ENCODE measurements at regions of chr1 and their contacts with region 1.

Region 1: GRCh38 chr1:66331657-66332547 is 202.1 kb upstream of the SGIP1 start:
- DNase-seq: peak; percentile 78

Region 2: DNA sequence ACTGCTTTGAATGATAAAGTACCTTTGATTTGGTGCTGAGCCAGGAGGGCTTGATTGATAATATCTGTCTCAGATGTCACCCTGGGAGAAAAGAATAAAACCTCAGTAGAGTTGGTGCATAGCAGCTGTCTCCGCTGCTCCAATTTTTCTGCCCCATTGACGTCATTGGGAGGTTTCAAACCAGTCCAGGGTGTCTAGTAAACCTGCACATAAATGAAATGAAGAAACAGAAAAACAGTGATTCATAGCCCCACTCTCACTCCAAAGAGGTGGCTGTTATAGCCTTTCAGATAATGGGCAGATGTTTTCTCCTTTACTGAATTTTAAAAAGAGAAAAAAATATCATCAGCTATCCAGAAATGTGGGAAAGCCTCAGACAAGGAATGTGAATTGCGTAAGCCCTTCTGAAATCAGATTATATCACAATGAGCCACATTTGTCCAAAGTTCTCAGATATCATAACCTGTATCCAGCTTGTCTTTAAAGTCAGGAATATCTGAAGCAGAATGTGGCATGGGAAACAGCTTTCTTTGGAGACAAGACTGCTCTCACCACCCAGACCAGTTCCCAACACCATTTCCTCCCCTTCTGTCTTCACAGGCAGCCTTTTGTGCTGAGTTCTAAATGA is 149.2 kb before region 1 on chr1:
- CTCF ChIA-PET with region 1: no interaction called
- POLR2A ChIA-PET with region 1: no interaction called
- DNase-seq: peak; percentile 41

Region 3: DNA sequence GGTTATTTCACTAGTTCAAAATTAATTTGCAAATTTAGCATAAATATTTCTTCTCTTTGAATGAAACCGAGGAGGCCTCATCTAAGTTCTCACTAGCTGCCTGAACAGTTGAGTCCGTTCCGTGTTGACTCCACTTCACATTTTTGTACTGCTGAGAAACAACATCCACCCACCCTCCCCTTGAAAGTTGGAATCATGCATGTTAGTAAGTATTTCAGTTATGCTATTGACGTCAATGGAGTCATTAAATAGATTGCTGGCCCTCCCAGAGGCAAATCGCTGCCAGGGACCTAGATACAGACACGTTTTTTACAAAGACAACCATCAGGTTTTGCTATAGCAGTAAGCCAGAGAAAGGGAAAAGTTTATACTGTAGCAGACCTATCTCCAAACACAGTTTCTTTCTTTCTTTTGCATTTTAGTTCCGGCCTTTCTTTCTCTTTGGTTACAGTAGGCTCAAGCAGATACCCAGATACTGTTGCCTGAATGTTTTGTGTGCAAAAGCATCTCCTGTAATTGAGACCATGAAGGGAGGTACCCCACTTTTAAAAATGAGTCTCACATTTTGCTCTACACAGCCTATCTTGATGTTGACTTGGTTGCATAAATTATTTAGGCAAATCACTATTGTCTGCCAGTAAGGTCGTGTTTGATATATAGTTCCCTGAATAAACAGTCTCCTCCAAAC is 60.5 kb before region 1 on chr1:
- CTCF ChIA-PET with region 1: interaction called, 4 read pairs
- POLR2A ChIA-PET with region 1: interaction called, 28 read pairs
- DNase-seq: peak; percentile 80

Region 4: DNA sequence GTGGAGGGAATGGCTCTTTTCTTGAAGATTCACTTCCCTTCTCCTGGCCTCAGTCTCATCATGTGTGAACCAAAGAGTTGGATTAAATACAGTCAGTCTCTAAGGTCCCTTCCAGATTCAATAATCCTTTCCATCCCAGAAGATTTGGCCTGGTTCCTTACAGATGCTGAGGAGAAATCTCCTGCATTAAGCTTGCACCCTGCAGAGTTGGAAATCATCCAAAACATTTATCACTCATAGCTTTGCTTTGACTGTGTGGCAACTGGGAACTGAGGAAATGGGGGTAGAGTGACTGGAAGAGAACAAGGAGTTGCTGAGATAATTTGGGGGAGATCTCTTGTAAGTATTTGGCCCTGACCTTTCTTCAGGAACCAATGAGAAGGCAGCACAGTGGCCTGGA is 18.5 kb before region 1 on chr1:
- CTCF ChIA-PET with region 1: no interaction called
- POLR2A ChIA-PET with region 1: no interaction called
- DNase-seq: no peak

Measured in HEK293T (cell line).